Sciatic nerve (tissue), 2 donors: ENCODE measurements at regions of chr2 and their contacts with region 1.

Region 1: GRCh38 chr2:46355756-46356155 is 58.5 kb downstream of the EPAS1 start:
- DNase-seq: no peak
- ATAC-seq: no peak

Region 2: DNA sequence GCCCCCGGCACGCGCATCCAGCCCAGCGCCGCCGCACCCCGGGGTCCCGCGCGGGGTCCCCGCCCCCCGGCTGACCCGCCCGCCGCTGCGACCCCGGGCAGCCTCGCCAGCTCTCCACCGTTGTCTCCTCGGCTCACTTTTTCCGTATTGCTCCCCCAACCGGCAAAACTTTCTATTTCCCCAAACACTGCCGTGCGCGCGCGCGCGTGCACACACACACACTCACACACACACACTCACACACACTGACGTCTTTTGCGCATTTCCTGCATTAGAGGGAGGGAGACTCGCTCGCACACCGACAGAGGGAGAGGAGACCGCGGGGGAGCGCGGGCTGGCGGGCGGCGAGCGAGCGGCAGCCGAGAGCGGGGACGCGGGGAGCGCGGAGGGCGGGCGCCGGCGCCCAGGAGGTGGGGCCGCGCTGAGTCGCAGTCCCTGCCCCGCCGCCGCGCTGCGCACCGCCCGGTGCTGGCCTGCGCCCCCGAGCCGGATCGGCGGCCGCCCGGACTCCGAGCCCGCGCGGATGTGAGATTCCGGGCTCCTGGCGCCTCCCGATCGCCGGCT is 704.8 kb before region 1 on chr2:
- intact Hi-C with region 1: no loop called
- DNase-seq: peak; percentile 97
- ATAC-seq: peak; percentile 87

Region 3: DNA sequence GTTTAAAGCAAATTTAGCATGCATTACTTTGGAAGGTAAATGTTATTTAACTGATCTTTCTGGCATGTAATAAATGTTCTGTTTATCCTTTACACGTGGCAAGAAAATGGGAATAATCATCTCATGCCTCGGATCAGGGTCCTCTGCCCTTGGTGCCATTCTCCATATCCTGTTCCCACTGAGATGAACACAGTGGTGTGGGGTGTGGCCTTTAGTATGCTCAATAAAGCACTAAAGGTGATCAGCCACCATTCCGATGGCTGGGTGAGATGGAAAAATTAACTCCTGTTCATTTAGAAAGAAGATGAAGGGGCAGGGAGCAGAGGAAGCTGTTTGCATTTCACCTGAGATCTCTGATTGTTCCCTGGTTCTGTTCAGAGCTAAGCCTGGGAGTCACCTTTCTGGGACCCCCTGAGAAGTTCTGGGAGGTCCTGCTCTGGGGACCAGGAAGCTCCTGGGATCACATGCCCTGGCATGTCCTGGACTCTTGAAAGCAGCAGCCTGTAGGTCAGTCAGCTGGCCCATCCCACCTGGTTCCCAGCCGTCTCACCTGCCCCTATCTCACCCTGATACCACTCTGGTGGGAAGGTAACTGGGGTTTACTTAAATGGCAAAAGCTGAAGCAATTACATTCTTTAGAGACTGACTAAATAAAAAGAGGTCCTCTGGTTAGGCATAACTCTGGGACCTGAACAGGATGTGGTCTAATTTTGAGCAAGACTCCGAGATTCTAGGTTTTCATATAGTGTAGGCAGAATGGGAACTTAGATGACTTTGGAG is 347.5 kb before region 1 on chr2:
- intact Hi-C with region 1: loop called (anchors 5 kb)
- DNase-seq: no peak
- ATAC-seq: no peak